HepG2 (cell line): ENCODE measurements at regions of chr14 and their contacts with region 1.

Region 1: GRCh38 chr14:28608851-28609828 is 157.4 kb upstream of the FOXG1 start:
- DNase-seq: peak; percentile 58
- ATAC-seq: peak; percentile 95
- H3K4me3 ChIP-seq: no peak overlapping the region
- H3K27ac ChIP-seq: no peak overlapping the region
- H3K4me1 ChIP-seq: no peaks in the 10 kb centered on the region
- H3K27me3 ChIP-seq: no peaks in the 10 kb centered on the region
- CTCF ChIP-seq: peak; percentile 93
- EP300 ChIP-seq: no peak
- POLR2A ChIP-seq: no peak
- RAD21 ChIP-seq: peak; percentile 83

Region 2: DNA sequence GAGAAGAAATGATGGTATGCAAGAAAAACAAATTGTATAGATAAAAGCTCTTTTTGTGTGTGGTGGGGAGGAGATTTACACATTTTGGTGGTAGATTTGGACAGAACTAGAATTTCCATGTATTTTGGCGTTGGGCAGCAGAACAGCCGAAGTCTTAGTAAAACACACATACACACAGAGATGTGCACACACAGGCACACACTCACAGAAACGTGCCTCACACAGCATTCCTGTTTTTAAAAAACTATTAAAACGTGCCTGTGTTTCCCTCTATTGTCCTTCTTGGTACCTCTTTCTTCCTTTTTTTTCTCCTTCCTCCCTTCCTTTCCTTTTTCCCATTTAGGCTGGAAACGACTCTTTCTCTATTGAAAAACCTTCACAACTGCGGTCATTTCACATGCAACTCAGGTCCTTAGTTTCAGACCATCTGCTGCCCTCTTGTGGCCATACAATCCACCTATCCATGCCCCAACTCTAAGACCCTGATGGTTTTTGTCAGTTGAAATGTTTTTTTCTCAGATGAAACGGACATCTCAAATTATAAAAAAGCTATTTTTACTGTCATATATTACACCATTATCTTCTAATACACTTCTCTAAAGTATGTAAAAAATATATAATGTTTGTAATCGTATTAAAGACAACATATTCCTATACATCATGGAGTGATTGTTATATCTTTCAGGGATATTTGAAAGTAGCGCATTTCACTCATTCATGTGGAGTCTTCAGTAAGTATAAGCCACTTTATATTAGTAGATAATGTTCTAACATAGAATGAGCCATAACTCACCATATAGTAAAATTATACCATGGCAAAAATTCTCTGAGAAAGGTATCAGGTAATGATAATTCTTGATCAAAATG is 1624.6 kb before region 1 on chr14:
- CTCF ChIA-PET with region 1: no interaction called
- POLR2A ChIA-PET with region 1: no interaction called
- in situ Hi-C with region 1: no loop called
- intact Hi-C with region 1: loop called (anchors 1 kb)
- DNase-seq: peak; percentile 64
- ATAC-seq: peak; percentile 99
- H3K4me3 ChIP-seq: no peak overlapping the region
- H3K27ac ChIP-seq: no peak overlapping the region
- H3K4me1 ChIP-seq: no peaks in the 10 kb centered on the region
- H3K27me3 ChIP-seq: no peaks in the 10 kb centered on the region
- CTCF ChIP-seq: peak; percentile 79
- EP300 ChIP-seq: no peak
- POLR2A ChIP-seq: no peak
- RAD21 ChIP-seq: no peak

Region 3: DNA sequence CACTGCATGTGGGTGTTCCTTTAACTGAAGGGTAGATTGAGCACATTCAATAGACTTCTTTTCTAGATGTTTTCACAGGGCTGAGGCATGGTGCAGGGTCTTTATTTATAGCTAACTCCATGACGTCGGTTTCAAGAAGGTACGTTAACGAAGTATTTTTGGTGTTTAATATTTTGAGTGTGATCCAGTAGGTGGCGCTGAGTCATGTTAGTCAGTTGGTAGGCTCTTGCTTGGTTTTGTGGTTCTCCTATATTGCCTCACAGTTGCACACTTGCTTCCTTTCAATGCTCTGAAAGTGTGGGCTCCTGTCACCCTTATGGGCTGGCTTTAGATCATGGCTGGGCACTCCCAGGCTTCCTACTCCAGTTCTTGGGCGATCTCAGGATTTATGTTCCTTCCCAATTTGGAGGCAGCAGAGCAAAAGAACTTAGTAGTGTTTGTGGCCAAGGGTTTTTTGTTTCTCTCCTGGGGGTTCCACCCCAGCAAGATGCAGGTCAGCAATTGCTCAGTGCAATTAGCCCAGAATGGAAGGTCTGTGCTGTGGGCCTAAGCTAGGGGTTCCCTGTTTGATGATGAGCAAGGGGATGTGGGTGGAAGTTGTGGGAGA is 314.2 kb before region 1 on chr14:
- CTCF ChIA-PET with region 1: interaction called, 9 read pairs
- POLR2A ChIA-PET with region 1: no interaction called
- in situ Hi-C with region 1: no loop called
- intact Hi-C with region 1: loop called (anchors 1 kb)
- DNase-seq: peak; percentile 27
- ATAC-seq: peak; percentile 49; the same call in 2 of the 3 replicates
- H3K4me3 ChIP-seq: no peak overlapping the region
- H3K27ac ChIP-seq: no peak overlapping the region
- H3K4me1 ChIP-seq: no peaks in the 10 kb centered on the region
- H3K27me3 ChIP-seq: no peaks in the 10 kb centered on the region
- CTCF ChIP-seq: peak; percentile 33
- EP300 ChIP-seq: no peak
- POLR2A ChIP-seq: no peak
- RAD21 ChIP-seq: no peak

Region 4: GRCh38 chr14:28375295-28375694 is 233.8 kb before region 1 on chr14:
- CTCF ChIA-PET with region 1: interaction called, 14 read pairs
- POLR2A ChIA-PET with region 1: no interaction called
- in situ Hi-C with region 1: no loop called
- intact Hi-C with region 1: loop called (anchors 1 kb)
- DNase-seq: no peak
- ATAC-seq: no peak
- H3K4me3 ChIP-seq: no peak overlapping the region
- H3K27ac ChIP-seq: no peak overlapping the region
- H3K4me1 ChIP-seq: no peaks in the 10 kb centered on the region
- H3K27me3 ChIP-seq: no peaks in the 10 kb centered on the region
- CTCF ChIP-seq: no peak
- EP300 ChIP-seq: no peak
- POLR2A ChIP-seq: no peak
- RAD21 ChIP-seq: no peak

Region 5: DNA sequence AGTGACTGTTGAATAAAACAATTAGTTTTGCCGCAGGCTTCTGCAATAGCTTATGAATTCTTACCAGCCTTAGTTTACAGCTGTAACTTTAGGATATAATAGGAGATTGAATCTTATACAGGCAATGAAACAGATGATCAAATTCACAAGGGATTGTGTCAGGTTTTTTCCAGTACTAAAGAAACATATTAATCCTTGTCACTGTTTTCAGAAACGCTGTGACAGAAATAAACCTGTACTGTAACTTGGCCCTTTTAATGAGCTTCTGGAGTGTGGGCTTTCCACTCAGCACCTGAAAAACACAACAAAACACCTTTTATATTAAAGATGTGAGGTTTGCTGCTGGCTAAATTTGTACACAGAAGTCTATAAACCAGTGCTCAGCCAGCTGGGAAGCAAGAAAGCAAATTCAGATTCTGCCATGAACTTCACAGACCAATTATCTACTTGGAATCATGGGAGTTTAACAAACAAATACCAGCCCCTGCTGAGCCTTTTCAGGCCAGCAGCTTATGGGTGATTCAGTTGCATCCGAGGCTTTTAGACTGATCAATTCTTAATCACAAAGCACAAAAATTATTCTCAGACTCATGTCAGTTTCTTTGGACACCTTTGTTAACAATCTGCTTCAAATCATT is 266.9 kb after region 1 on chr14:
- CTCF ChIA-PET with region 1: no interaction called
- POLR2A ChIA-PET with region 1: no interaction called
- in situ Hi-C with region 1: no loop called
- intact Hi-C with region 1: no loop called
- DNase-seq: no peak
- ATAC-seq: no peak
- H3K4me3 ChIP-seq: no peak overlapping the region
- H3K27ac ChIP-seq: no peak overlapping the region
- H3K4me1 ChIP-seq: no peaks in the 10 kb centered on the region
- H3K27me3 ChIP-seq: no peaks in the 10 kb centered on the region
- CTCF ChIP-seq: no peak
- EP300 ChIP-seq: no peak
- POLR2A ChIP-seq: no peak
- RAD21 ChIP-seq: no peak